CD8-positive, alpha-beta T cell (primary cell): ENCODE measurements at regions of chr16 and their contacts with region 1.

Region 1: GRCh38 chr16:81745704-81746558 is 33.2 kb upstream of the PLCG2 start:
- DNase-seq: peak; percentile 46 to 86 (median 77)
- ATAC-seq: peak; percentile 97
- H3K4me3 ChIP-seq: peak overlapping the region; percentile 48 to 60
- H3K4me3 Mint-ChIP-seq: peak overlapping the region; percentile 86
- H3K27ac ChIP-seq: peak overlapping the region; percentile 24 to 60
- H3K27ac Mint-ChIP-seq: peak overlapping the region; percentile 89
- H3K4me1 ChIP-seq: peaks cover 9% of the 10 kb centered on the region
- H3K4me1 Mint-ChIP-seq: peaks cover 11% of the 10 kb centered on the region
- H3K27me3 ChIP-seq: no peaks in the 10 kb centered on the region
- H3K27me3 Mint-ChIP-seq: no peaks in the 10 kb centered on the region
- CTCF ChIP-seq: no peak

Region 2: GRCh38 chr16:81095953-81096717 is 649.8 kb before region 1 on chr16 and contains the start of gene GCSH:
- CTCF ChIA-PET with region 1: no interaction called
- POLR2A ChIA-PET with region 1: no interaction called
- intact Hi-C with region 1: loop called in 1 of 2 experiments (anchors 2 kb)
- DNase-seq: peak; percentile 94 to 100 (median 98)
- ATAC-seq: peak; percentile 97
- H3K4me3 ChIP-seq: peak within 1 kb of the TSS; percentile 59 to 71
- H3K4me3 Mint-ChIP-seq: peak within 1 kb of the TSS; percentile 88
- H3K27ac ChIP-seq: peak within 1 kb of the TSS; percentile 43 to 58
- H3K27ac Mint-ChIP-seq: peak within 1 kb of the TSS; percentile 49
- H3K4me1 ChIP-seq: peaks cover 7% of the 10 kb centered on the region
- H3K4me1 Mint-ChIP-seq: peaks cover 14% of the 10 kb centered on the region
- H3K27me3 ChIP-seq: no peaks in the 10 kb centered on the region
- H3K27me3 Mint-ChIP-seq: no peaks in the 10 kb centered on the region
- CTCF ChIP-seq: no peak
- total RNA-seq, gene GCSH: 2.5 to 2.8 TPM

Region 3: GRCh38 chr16:81730090-81731051 is 15.6 kb before region 1 on chr16:
- CTCF ChIA-PET with region 1: interaction called, 15 read pairs
- POLR2A ChIA-PET with region 1: interaction called, 3 read pairs
- intact Hi-C with region 1: loop called in 1 of 2 experiments (anchors 1 kb)
- DNase-seq: peak; percentile 20 to 80 (median 59)
- ATAC-seq: peak; percentile 93
- H3K4me3 ChIP-seq: peak overlapping the region; percentile 51 to 64
- H3K4me3 Mint-ChIP-seq: peak overlapping the region; percentile 92
- H3K27ac ChIP-seq: peak overlapping the region; percentile 47 to 52
- H3K27ac Mint-ChIP-seq: peak overlapping the region; percentile 92
- H3K4me1 ChIP-seq: peaks cover 11% of the 10 kb centered on the region
- H3K4me1 Mint-ChIP-seq: peaks cover 13% of the 10 kb centered on the region
- H3K27me3 ChIP-seq: no peaks in the 10 kb centered on the region
- H3K27me3 Mint-ChIP-seq: no peaks in the 10 kb centered on the region
- CTCF ChIP-seq: peak; percentile 54

Region 4: DNA sequence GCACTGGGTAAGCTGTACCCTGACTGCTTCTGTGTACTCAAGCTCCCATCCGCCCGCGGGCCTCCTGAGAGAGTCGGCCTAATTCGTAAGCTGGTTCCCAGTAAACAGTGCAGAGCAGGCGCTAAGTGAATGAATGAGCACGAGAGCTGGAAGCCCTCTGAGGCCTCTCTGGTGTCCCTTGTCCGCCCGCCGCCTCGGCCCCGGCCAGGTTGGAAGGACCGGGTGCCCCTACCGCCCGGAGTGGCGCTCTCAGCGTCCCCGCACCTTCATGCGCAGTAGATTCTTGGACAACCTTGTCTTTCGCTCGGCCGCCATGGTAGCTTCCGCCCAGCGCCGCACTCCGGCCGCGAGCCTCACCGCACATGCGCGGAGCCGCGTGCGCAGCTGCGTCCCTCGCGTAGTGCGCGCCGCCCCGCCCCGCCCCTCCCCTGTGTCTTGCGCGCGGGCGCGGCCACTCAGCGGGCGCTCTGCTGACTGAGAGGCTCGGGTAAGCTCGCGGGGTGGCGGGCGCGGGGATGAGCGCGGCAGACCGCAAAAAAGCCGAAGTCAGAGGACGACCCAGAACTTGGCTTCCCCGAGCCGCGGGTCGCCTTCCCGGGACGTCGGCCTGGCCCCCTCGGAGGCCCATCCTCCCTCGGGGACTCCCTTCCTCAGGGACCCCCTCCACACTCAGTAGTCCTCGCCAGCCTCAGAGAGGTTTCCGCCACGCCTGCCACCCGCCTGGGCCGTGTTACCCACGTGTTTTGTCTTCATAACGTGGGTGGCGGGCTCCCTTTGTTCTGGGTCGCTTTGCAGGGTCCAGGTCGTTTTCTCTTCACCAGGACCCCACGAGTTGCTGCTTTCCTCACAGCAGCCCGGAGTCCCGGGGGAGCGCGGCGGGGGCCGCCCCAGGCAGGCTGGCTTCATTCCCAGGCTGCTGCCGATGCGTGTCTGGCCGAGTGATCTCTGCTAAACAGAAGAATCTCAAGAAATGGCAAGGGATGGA is 424.2 kb after region 1 on chr16 and contains the start of gene MPHOSPH6:
- CTCF ChIA-PET with region 1: no interaction called
- POLR2A ChIA-PET with region 1: no interaction called
- intact Hi-C with region 1: loop called in 1 of 2 experiments (anchors 10 kb)
- DNase-seq: peak; percentile 77 to 95 (median 90)
- ATAC-seq: peak; percentile 94
- H3K4me3 ChIP-seq: peak within 1 kb of the TSS; percentile 85 to 95
- H3K4me3 Mint-ChIP-seq: peak within 1 kb of the TSS; percentile 96
- H3K27ac ChIP-seq: peak within 1 kb of the TSS; percentile 82 to 90
- H3K27ac Mint-ChIP-seq: peak within 1 kb of the TSS; percentile 97
- H3K4me1 ChIP-seq: peaks cover 15% of the 10 kb centered on the region
- H3K4me1 Mint-ChIP-seq: peaks cover 36% of the 10 kb centered on the region
- H3K27me3 ChIP-seq: no peaks in the 10 kb centered on the region
- H3K27me3 Mint-ChIP-seq: peaks cover 3% of the 10 kb centered on the region
- CTCF ChIP-seq: no peak
- total RNA-seq, gene MPHOSPH6: 19.5 to 24.1 TPM